Activated CD4-positive, alpha-beta memory T cell treated with anti-CD3 and anti-CD28 coated beads, Interleukin-2, amount 10 ng/mL, durations not matched to agents 7 days and 5 days (primary cell): ENCODE measurements at regions of chr14 and their contacts with region 1.

Region 1: DNA sequence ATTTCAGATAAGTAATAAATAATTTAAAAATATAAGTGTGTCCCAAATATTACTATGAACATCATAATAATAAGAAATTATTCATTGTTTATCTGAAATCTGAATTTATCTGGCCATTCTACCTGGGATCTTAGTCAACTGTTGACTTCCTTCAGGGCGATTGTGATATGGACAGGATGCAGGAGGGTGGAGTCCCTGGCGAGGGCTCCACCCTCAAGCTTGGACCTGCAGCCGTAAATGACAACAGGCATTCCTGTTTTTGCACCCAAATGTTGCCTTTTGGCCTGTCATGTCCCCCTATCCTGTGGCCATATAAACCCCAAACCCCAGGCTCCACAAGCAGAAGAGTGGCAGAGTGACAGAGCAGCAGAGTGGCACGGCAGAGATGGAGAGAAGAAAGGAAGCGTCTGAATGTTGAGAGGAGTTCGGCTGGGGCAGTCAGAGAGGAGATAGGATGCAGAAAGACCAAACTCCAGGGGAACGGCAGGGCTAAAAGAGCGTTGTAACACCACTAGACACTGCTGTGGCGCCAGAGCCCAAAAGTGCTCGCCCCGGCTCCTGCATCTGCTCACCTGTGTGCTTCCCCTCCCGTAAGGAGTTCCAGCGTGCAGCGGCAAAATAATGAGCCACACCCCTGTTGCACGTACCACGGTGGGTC is 39.4 kb upstream of the FUT8 start:
- DNase-seq: peak; percentile 21
- H3K4me3 Mint-ChIP-seq: peak overlapping the region; percentile 36
- H3K27ac Mint-ChIP-seq: peak overlapping the region; percentile 78
- H3K4me1 Mint-ChIP-seq: peaks cover 55% of the 10 kb centered on the region
- H3K27me3 Mint-ChIP-seq: no peaks in the 10 kb centered on the region

Region 2: GRCh38 chr14:65281991-65282895 is 90.9 kb before region 1 on chr14:
- CTCF ChIA-PET with region 1: no interaction called
- POLR2A ChIA-PET with region 1: no interaction called
- DNase-seq: peak; percentile 46
- H3K4me3 Mint-ChIP-seq: peak overlapping the region; percentile 60
- H3K27ac Mint-ChIP-seq: peak overlapping the region; percentile 84
- H3K4me1 Mint-ChIP-seq: peaks cover 37% of the 10 kb centered on the region
- H3K27me3 Mint-ChIP-seq: no peaks in the 10 kb centered on the region

Region 3: DNA sequence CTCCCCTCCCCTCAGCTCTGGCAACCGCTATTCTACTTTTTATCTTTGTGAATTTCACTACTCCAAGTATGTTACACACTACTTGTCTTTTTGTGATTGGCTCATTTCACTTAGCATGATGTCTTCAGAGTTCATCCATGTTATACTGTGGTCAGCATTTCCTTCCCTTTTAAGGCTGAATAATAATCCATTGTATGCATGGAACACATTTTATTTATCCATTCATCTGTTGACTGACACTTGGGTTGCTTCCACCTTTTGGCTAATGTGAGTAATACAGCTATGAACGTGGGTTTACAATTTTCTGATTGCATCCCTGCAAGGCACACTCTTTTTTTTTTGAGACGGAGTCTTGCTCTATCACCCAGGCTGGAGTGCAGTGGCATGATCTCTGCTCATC is 13.6 kb before region 1 on chr14:
- CTCF ChIA-PET with region 1: interaction called, 11 read pairs
- POLR2A ChIA-PET with region 1: no interaction called
- DNase-seq: no peak
- H3K4me3 Mint-ChIP-seq: no peak overlapping the region
- H3K27ac Mint-ChIP-seq: peak overlapping the region; percentile 5
- H3K4me1 Mint-ChIP-seq: peaks cover 40% of the 10 kb centered on the region
- H3K27me3 Mint-ChIP-seq: no peaks in the 10 kb centered on the region